Heart right ventricle (tissue), 16 donors: ENCODE measurements at regions of chr3 and their contacts with region 1.

Region 1: DNA sequence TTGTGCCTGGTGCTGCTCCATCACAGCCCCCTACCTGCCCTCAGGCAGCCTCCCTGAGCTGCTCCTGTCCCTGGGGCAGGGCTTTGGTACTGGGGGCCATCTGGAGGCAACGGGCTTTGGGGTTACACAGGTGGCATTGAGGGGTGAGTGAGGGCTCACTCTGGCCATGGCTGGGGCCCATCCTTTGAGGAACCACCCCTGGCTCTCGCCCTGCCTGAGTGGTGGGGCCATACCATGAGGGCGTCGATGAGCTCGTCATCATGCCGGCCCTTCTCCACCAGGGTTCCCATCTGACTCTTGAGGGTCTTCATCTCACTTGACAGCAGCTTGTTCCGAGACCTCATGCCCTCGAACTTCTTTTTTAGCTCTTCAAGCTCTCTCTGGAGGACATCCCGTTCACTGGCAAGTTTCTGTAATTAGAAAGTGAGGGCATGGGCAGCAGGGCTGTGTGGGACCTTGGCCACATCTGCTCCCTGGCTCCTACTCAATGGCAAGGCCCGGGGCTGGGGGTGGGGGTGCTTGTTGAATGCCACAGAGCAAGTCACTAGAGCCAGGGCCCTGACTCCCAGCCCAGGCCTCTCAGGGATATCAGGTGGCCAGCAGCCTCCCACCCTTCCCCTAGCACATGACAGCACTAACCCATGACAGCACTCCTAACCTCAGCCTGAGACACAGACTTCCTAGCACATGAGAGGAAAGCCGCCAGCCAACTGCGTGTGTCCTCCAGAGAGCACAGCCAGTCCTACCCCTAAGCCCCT is 33.5 kb downstream of the CCDC13 start:
- DNase-seq: peak; percentile 85 to 92
- ATAC-seq: peak; percentile 87 to 97 (median 95)
- H3K4me3 ChIP-seq: no peak overlapping the region
- H3K27ac ChIP-seq: peak overlapping the region; percentile 80 to 99 (median 90)
- H3K4me1 ChIP-seq: peaks cover 4 to 47% (median 13%) of the 10 kb centered on the region in 9 donors
- H3K27me3 ChIP-seq: no peaks in the 10 kb centered on the region
- CTCF ChIP-seq: no peak

Region 2: GRCh38 chr3:42600111-42600988 is 139.2 kb before region 1 on chr3 and contains the start of gene NKTR:
- intact Hi-C with region 1: loop called in 1 of 10 experiments (anchors 1 kb)
- DNase-seq: peak; percentile 97
- ATAC-seq: peak; percentile 93 to 97 (median 96)
- H3K4me3 ChIP-seq: peak within 1 kb of the TSS; percentile 77 to 96 (median 86)
- H3K27ac ChIP-seq: peak within 1 kb of the TSS; percentile 98 to 100 (median 98)
- H3K4me1 ChIP-seq: peaks cover 0 to 40% (median 24%) of the 10 kb centered on the region in 9 donors
- H3K27me3 ChIP-seq: no peaks in the 10 kb centered on the region
- CTCF ChIP-seq: peak in 3 of 9 donors; percentile 12 to 38 (median 16)
- total RNA-seq, gene NKTR: 19.7 to 28.4 (median 21.9) TPM

Region 3: DNA sequence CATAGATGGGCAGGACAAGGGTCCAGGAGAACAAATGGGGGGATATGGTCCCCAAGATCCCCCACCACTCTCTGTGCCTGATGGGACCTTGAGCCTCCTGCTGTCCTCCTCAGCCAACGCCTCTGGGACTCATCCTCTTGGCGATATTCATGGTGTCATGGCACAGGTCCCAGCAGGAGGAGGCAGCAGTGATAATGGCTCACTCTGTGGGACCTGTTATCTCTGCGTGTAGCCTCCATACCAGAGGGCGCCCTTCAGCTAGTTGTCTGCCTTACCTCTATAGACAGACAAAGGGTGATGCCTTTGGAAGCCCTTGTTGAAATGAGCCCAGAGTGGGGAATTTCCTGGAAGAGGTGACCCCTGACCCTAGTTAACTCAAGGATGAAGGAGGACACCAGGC is 78.7 kb before region 1 on chr3:
- intact Hi-C with region 1: loop called in 5 of 10 experiments (anchors 2 to 10 kb)
- DNase-seq: no peak
- ATAC-seq: peak in 5 of 8 donors; percentile 5 to 66 (median 45)
- H3K4me3 ChIP-seq: no peak overlapping the region
- H3K27ac ChIP-seq: peak overlapping the region in 7 of 10 donors; percentile 23 to 70 (median 57)
- H3K4me1 ChIP-seq: peaks cover 7 to 64% (median 26%) of the 10 kb centered on the region in 9 donors
- H3K27me3 ChIP-seq: no peaks in the 10 kb centered on the region
- CTCF ChIP-seq: peak in 6 of 9 donors; percentile 13 to 46 (median 28)

Region 4: DNA sequence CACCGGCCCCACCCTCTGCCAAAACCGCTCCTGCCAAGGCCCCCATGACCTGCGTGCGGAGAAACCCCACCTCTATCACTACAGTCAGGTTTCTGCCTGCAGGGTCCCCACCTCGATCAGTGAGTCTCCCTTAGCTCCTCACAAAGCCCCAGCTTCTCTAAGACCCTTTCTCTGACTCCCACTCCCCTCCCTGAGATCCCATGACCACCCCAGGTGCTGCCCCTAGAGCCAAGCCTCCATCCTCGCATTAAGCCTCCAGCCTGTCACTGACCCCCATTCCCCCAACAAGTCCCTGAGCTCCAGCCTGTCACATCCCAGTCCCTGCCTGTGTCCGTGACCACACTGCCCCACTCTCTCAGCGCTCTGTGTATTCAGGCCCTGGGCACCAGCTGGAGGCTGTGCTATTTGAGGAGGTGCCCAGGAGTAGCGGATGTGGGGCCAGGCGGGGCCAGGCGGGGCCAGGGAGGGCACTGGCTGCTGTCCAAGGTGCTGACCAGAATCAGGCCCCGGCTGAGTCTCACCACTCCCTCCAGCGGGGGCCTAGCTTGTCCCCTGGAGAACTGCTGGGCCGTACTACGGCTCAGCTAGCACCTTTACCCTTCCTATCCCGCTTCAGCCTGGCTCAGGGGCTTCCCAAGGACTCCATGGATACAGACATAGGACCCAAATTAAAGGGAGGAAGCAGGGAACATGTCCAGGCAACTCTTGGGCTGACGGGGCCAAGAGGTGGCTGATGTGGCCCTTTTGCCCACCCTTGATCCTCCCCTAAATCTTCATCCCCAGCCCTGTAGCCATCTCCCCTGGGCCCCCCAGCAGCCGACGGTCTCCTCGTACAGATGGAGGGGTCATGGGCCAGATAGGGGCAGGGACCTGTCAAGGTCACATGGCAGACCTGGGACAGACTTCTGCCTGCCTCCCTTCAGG is 38.2 kb before region 1 on chr3:
- intact Hi-C with region 1: loop called in 7 of 10 experiments (anchors 1 to 5 kb)
- DNase-seq: peak; percentile 82 to 86
- ATAC-seq: peak; percentile 67 to 87 (median 82)
- H3K4me3 ChIP-seq: peak overlapping the region; percentile 35 to 64 (median 52)
- H3K27ac ChIP-seq: peak overlapping the region; percentile 85 to 99 (median 96)
- H3K4me1 ChIP-seq: peaks cover 0 to 70% (median 27%) of the 10 kb centered on the region in 9 donors
- H3K27me3 ChIP-seq: no peaks in the 10 kb centered on the region
- CTCF ChIP-seq: peak in 1 of 9 donors; percentile 24